Endothelial cell of umbilical vein (primary cell): ENCODE measurements at regions of chr14 and their contacts with region 1.

Region 1: GRCh38 chr14:66824251-66824650 is 316.3 kb downstream of the GPHN start:
- DNase-seq: peak; percentile 76
- H3K4me3 ChIP-seq: no peak overlapping the region
- H3K27ac ChIP-seq: no peak overlapping the region
- H3K4me1 ChIP-seq: peaks cover 16% of the 10 kb centered on the region
- H3K27me3 ChIP-seq: no peaks in the 10 kb centered on the region
- CTCF ChIP-seq: no peak
- POLR2A ChIP-seq: no peak

Region 2: GRCh38 chr14:66920196-66920595 is 95.9 kb after region 1 on chr14:
- CTCF ChIA-PET with region 1: no interaction called
- POLR2A ChIA-PET with region 1: no interaction called
- dilution Hi-C with region 1: loop called (anchors 25 kb)
- intact Hi-C with region 1: no loop called
- DNase-seq: no peak
- H3K4me3 ChIP-seq: no peak overlapping the region
- H3K27ac ChIP-seq: no peak overlapping the region
- H3K4me1 ChIP-seq: no peaks in the 10 kb centered on the region
- H3K27me3 ChIP-seq: no peaks in the 10 kb centered on the region
- CTCF ChIP-seq: no peak
- POLR2A ChIP-seq: no peak